ENCODE measurements at regions of chr19 and their contacts with region 1.

Region 1: GRCh38 chr19:18349524-18350128 is 9.2 kb downstream of the PGPEP1 start:
- DNase-seq: peak; percentile 76
- H3K27ac ChIP-seq: no peak overlapping the region
- CTCF ChIP-seq: peak; percentile 96

Region 2: DNA sequence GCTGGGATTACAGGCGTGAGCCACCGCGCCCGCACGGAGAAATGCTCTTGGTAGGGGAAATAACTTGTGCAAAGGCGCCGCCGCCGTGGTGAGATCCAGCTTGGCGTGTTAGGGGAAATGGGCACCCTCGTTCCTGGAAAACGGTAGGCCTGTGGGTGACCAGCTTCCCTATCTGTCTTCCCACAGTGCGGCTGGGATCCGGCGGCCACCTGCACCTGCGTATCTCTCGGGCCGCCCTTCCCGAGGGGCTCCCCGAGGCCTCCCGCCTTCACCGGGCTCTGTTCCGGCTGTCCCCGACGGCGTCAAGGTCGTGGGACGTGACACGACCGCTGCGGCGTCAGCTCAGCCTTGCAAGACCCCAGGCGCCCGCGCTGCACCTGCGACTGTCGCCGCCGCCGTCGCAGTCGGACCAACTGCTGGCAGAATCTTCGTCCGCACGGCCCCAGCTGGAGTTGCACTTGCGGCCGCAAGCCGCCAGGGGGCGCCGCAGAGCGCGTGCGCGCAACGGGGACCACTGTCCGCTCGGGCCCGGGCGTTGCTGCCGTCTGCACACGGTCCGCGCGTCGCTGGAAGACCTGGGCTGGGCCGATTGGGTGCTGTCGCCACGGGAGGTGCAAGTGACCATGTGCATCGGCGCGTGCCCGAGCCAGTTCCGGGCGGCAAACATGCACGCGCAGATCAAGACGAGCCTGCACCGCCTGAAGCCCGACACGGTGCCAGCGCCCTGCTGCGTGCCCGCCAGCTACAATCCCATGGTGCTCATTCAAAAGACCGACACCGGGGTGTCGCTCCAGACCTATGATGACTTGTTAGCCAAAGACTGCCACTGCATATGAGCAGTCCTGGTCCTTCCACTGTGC is 38.7 kb after region 1 on chr19:
- CTCF ChIA-PET with region 1: interaction called, 20 read pairs
- POLR2A ChIA-PET with region 1: no interaction called
- DNase-seq: peak; percentile 74
- H3K27ac ChIP-seq: peak overlapping the region; percentile 51
- CTCF ChIP-seq: peak; percentile 100

Region 3: GRCh38 chr19:18408053-18408476 is 58.4 kb after region 1 on chr19:
- CTCF ChIA-PET with region 1: interaction called, 18 read pairs
- POLR2A ChIA-PET with region 1: interaction called, 3 read pairs
- DNase-seq: no peak
- H3K27ac ChIP-seq: peak overlapping the region; percentile 14
- CTCF ChIP-seq: peak; percentile 35